ENCODE measurements at regions of chr4 and their contacts with region 1.

Region 1: GRCh38 chr4:67545199-67546003 is at the start of gene CENPC:
- DNase-seq: peak; percentile 99
- H3K4me3 ChIP-seq: peak within 1 kb of the TSS; percentile 87 to 100 (median 100)
- H3K27ac ChIP-seq: peak within 1 kb of the TSS; percentile 99
- H3K4me1 ChIP-seq: peaks cover 13% of the 10 kb centered on the region
- H3K27me3 ChIP-seq: no peaks in the 10 kb centered on the region
- CTCF ChIP-seq: no peak
- POLR2A ChIP-seq: peak; percentile 96
- total RNA-seq, gene CENPC: 24.5 and 26.4 TPM in 2 replicates

Region 2: DNA sequence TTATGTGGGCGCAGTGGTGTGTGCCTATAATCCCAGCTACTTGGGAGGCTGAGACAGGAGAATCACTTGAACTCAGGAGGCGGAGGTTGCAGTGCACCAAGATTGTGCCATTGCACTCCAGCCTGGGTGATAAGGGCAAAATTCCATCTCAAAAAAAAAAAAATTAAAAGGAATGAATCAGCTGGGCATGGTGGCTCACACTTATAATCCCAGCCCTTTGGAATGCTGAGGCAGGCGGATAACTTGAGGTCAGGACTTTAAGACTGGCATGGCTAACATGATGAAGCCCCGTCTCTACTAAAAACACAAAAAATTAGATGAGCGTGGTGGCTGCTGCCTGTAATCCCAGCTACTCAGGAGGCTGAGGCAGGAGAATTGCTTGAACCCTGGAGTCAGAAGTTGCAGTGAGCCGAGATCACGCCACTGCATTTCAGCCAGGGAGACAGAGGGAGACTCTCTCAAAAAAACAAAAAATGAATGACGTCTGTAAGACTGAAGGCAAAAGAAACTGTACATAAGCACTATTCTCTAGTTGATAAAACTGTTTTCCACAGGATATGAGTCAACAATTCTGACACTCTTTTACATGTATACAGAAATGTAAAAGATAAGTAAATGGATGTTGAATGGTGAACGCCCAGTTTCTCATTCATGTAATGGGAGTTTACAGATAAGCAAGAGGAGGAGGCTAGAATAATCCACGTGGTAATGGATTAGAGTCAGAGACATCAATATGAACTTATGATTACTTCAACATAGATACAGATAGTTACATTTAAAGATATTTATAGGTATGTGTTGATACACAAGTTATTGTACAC is 22.3 kb before region 1 on chr4:
- CTCF ChIA-PET with region 1: no interaction called
- POLR2A ChIA-PET with region 1: no interaction called
- dilution Hi-C with region 1: no loop called
- intact Hi-C with region 1: loop called (anchors 1 kb)
- DNase-seq: peak; percentile 82
- H3K4me3 ChIP-seq: no peak overlapping the region
- H3K27ac ChIP-seq: peak overlapping the region; percentile 84
- H3K4me1 ChIP-seq: peaks cover 14% of the 10 kb centered on the region
- H3K27me3 ChIP-seq: no peaks in the 10 kb centered on the region
- CTCF ChIP-seq: no peak
- POLR2A ChIP-seq: no peak

Region 3: GRCh38 chr4:67700738-67701516 is 155.5 kb after region 1 on chr4 and contains the start of gene UBA6:
- CTCF ChIA-PET with region 1: no interaction called
- POLR2A ChIA-PET with region 1: no interaction called
- dilution Hi-C with region 1: no loop called
- intact Hi-C with region 1: loop called (anchors 1 kb)
- DNase-seq: peak; percentile 94
- H3K4me3 ChIP-seq: peak within 1 kb of the TSS; percentile 66 to 94 (median 84)
- H3K27ac ChIP-seq: peak within 1 kb of the TSS; percentile 93
- H3K4me1 ChIP-seq: peaks cover 21% of the 10 kb centered on the region
- H3K27me3 ChIP-seq: no peaks in the 10 kb centered on the region
- CTCF ChIP-seq: peak; percentile 12 to 37
- POLR2A ChIP-seq: peak; percentile 87
- total RNA-seq, gene UBA6: 96.4 and 97.4 TPM in 2 replicates

Region 4: DNA sequence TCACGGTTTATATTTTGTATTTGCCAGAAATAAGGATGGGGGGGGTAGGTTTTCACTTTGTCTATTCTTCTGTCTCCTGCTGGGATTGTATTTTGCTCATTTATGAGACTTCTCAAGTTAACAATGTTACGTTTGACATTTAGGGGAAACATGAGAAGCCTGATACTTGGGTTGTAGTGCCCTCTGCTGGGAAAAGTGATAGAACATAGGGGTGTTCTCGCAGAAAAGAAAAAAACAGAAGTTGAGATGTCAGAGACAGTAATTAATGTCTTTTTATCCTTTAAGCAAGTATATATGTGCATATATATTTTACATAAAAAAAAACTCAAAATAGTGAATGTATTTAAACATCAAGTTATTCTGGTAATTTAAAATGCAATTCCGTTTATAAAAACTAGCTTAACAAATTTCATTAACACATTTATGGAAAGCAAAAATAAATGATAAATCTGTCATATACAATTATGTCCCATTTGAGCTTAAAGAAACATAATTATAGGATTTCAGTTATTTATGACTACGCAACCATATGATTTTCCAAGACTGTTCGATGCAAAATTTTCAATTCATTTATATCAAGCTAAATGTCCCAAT is 630.3 kb after region 1 on chr4:
- CTCF ChIA-PET with region 1: no interaction called
- POLR2A ChIA-PET with region 1: no interaction called
- dilution Hi-C with region 1: no loop called
- intact Hi-C with region 1: loop called (anchors 1 kb)
- DNase-seq: peak; percentile 67
- H3K4me3 ChIP-seq: no peak overlapping the region
- H3K27ac ChIP-seq: no peak overlapping the region
- H3K4me1 ChIP-seq: no peaks in the 10 kb centered on the region
- H3K27me3 ChIP-seq: no peaks in the 10 kb centered on the region
- CTCF ChIP-seq: peak; percentile 23 to 39
- POLR2A ChIP-seq: no peak

Region 5: DNA sequence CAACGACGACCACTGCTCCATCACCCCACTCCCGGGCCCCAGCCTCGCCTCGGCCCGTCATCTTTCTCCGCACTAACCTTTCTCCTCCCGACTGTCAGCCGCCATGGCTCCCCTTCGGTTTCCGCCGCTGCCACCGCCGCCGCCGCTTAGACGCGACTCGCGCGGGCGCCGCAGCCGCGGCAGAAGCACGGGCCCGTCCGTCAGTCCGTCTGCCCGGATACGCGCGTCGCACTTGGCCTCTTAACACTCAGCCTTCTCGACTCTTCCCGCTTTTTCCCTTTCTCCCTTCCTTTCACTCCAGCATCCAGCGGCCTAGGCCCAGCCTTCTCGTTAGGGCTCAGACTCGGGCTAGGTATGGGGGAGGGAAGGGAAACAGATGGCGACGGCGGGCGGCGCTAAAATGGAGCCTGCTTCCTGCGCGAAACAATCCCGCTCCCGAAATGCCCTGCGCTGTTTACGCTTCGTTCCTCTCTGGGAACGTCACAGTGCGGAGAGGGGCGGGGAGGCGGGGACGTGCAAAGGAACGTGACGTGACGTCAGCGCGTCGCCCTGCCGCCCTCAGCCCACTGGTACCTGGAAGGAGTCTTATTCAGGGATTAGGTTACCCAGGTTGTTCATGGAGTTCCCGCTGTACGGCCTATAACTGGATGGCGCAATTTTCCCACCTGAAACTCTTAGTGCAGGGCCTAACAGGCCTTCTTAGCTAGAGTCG is 804.4 kb after region 1 on chr4 and contains the start of gene YTHDC1:
- CTCF ChIA-PET with region 1: no interaction called
- POLR2A ChIA-PET with region 1: no interaction called
- dilution Hi-C with region 1: no loop called
- intact Hi-C with region 1: loop called (anchors 5 kb)
- DNase-seq: peak; percentile 98
- H3K4me3 ChIP-seq: peak within 1 kb of the TSS; percentile 65 to 99 (median 82)
- H3K27ac ChIP-seq: peak within 1 kb of the TSS; percentile 89
- H3K4me1 ChIP-seq: peaks cover 18% of the 10 kb centered on the region
- H3K27me3 ChIP-seq: peaks cover 2% of the 10 kb centered on the region in 2 experiments
- CTCF ChIP-seq: no peak
- POLR2A ChIP-seq: peak; percentile 57
- total RNA-seq, gene YTHDC1: 60.4 and 68.7 TPM in 2 replicates

Measured in endothelial cell of umbilical vein (primary cell).